Heart left ventricle (tissue), 16 donors: ENCODE measurements at regions of chr7 and their contacts with region 1.

Region 1: DNA sequence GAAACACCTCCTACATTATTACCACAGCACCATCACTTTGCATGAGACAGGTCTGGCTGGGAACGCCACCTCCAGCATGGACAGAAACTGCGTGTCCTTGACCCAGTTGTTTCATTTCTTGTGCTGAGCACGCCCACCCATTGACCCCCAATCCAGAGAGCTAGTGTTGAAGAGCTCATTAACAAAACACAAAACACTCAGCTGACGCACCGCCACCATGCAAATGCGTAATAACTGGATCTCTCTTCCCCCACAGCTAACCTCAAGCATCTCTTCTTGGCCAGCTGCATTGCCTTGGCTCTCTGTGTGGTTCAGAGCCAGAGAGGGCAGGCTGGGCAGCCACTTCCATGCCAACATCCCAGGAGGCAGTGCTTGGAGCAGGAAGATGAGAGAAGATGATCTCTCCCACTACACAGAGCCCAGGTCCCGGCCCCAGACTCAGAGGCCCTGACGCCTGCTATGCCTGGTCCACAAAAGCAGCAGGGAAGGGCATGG is 173.5 kb downstream of the PLXNA4 start:
- DNase-seq: peak in 4 of 5 donors; percentile 47 to 85 (median 67)
- ATAC-seq: peak; percentile 64 to 85 (median 81)
- H3K4me3 ChIP-seq: peak overlapping the region in 1 of 12 donors; percentile 14
- H3K27ac ChIP-seq: peak overlapping the region in 10 of 12 donors; percentile 31 to 81 (median 74)
- H3K4me1 ChIP-seq: peaks cover 0 to 63% (median 17%) of the 10 kb centered on the region in 12 donors
- H3K27me3 ChIP-seq: no peaks in the 10 kb centered on the region
- CTCF ChIP-seq: no peak
- POLR2A ChIP-seq: no peak

Region 2: DNA sequence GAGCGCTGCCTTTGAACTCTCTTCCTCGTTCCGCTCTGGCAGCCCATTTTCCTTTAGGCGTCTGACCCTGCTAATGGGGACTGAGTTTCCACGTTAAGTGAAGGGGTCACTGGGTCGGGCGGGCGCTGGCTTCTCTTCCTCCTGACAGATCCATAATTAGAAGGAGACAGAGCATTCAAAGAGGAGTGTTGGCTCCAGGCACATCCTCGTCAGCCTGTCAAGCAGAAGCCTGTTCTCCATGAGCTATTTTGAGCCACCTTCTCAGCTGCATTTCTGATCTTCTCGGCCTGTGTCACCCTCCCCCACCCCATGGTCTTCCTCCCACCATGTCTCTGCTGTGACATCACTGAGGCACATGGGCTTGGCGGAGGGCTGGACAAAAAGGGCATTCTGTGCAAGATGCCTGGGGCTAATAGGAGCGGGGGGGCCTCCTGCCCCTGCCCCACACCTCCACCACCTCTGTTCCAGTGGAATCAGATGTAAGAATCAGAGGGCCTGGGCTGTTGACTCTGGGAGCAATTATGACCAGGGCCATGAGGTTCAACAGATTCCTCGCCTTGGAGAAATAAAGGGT is 74.7 kb before region 1 on chr7:
- intact Hi-C with region 1: loop called in 4 of 10 experiments (anchors 5 to 10 kb)
- DNase-seq: peak in 4 of 5 donors; percentile 28 to 63 (median 45)
- ATAC-seq: peak; percentile 53 to 90 (median 84)
- H3K4me3 ChIP-seq: no peak overlapping the region
- H3K27ac ChIP-seq: peak overlapping the region in 8 of 12 donors; percentile 6 to 69 (median 52)
- H3K4me1 ChIP-seq: peaks cover 0 to 51% (median 8%) of the 10 kb centered on the region in 12 donors
- H3K27me3 ChIP-seq: no peaks in the 10 kb centered on the region
- CTCF ChIP-seq: no peak
- POLR2A ChIP-seq: no peak

Region 3: GRCh38 chr7:132464746-132465145 is 61.9 kb after region 1 on chr7:
- intact Hi-C with region 1: loop called in 1 of 10 experiments (anchors 10 kb)
- DNase-seq: peak; percentile 57 to 83 (median 67)
- ATAC-seq: peak; percentile 76 to 91 (median 87)
- H3K4me3 ChIP-seq: no peak overlapping the region
- H3K27ac ChIP-seq: peak overlapping the region in 8 of 12 donors; percentile 49 to 78 (median 70)
- H3K4me1 ChIP-seq: peaks cover 0 to 30% (median 15%) of the 10 kb centered on the region in 12 donors
- H3K27me3 ChIP-seq: no peaks in the 10 kb centered on the region
- CTCF ChIP-seq: no peak
- POLR2A ChIP-seq: no peak

Region 4: DNA sequence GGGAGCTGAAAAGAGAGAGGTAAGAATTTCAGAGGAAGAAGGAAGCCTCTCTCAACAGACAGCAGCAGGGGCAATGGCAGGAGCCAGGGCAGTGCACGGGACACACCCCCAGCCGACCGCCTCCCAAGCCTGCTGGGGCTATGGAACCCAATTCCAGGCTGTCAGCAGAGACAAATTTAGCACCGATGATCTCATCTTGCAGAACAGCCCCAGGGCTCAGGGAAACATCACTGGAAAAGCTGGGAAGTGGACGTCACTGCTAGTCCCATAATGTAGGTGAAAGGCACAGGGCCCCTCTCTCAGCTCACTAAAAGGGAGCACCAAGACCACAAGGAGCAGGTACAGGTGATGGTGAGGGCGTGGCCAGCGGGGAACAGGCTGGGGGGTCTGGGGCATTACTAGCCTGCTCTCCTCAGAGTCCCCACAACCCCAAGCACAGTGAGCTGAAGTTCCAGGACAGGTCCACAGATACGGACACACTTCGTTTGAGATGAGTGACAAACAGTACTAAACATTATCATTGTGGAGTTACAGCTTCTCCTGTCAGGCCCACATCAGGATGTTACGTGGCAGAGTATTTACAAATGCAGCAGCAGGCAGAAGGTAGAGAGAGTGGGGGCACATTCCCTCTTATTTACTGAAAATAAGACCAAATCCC is 69.8 kb after region 1 on chr7:
- intact Hi-C with region 1: loop called in 2 of 10 experiments (anchors 5 to 10 kb)
- DNase-seq: peak; percentile 70 to 88 (median 80)
- ATAC-seq: peak; percentile 96 to 98 (median 96)
- H3K4me3 ChIP-seq: no peak overlapping the region
- H3K27ac ChIP-seq: peak overlapping the region; percentile 45 to 94 (median 86)
- H3K4me1 ChIP-seq: peaks cover 0 to 54% (median 36%) of the 10 kb centered on the region in 12 donors
- H3K27me3 ChIP-seq: no peaks in the 10 kb centered on the region
- CTCF ChIP-seq: no peak
- POLR2A ChIP-seq: no peak

Region 5: GRCh38 chr7:132488634-132489302 is 86.0 kb after region 1 on chr7:
- intact Hi-C with region 1: loop called in 2 of 10 experiments (anchors 10 kb)
- DNase-seq: peak in 1 of 5 donors; percentile 38
- ATAC-seq: peak in 2 of 4 donors; percentile 24 to 56
- H3K4me3 ChIP-seq: no peak overlapping the region
- H3K27ac ChIP-seq: no peak overlapping the region
- H3K4me1 ChIP-seq: peaks cover 0 to 47% (median 20%) of the 10 kb centered on the region in 12 donors
- H3K27me3 ChIP-seq: no peaks in the 10 kb centered on the region
- CTCF ChIP-seq: no peak
- POLR2A ChIP-seq: no peak

Region 6: GRCh38 chr7:132500727-132501440 is 98.1 kb after region 1 on chr7:
- intact Hi-C with region 1: loop called in 5 of 10 experiments (anchors 5 to 10 kb)
- DNase-seq: peak in 4 of 5 donors; percentile 64 to 82 (median 73)
- ATAC-seq: peak; percentile 81 to 92 (median 85)
- H3K4me3 ChIP-seq: no peak overlapping the region
- H3K27ac ChIP-seq: peak overlapping the region in 3 of 12 donors; percentile 0 to 37 (median 34)
- H3K4me1 ChIP-seq: peaks cover 0 to 29% (median 6%) of the 10 kb centered on the region in 12 donors
- H3K27me3 ChIP-seq: no peaks in the 10 kb centered on the region
- CTCF ChIP-seq: peak; percentile 15 to 63 (median 50)
- POLR2A ChIP-seq: no peak